ENCODE measurements at regions of chr4 and their contacts with region 1.

Region 1: DNA sequence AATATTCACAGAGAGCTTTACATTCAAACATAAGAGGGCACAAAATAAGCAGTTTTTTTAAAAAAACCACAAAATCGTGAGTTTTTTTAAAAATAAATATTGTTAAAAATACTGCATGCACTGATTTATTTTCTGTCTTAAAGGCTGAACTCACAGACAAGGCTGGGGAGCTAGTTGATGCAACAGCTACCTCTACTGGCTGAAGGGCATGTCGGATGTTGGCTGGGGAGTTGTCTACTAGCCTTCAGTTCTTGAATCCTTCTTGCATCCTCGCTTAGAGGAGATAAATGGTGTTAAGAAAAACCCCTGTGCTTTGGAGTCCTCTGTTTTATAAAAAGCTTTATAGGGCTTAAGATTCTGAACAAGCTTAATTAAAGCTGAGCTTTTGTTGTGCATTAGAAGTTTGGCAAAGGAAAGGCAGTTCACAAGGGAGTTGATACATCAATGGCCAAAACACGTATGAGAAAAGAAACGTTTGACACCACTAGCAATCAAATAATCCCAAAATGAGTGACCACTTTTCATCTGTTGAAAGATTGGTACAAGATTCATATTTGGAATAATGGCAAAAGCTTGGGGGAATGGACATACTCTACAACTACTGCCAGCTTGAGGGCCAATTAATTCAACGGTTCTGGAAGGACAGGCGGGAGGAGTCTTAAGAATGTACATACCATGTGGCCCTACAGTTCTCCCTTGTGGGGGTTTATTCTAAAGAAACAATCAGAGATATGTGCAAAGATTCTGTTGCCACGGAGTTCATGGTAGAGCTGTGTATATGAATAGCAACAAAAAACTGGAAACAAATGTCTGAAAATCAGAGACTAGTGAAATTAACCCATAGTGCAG is 94.7 kb downstream of the SEL1L3 start:
- DNase-seq: no peak
- H3K4me3 Mint-ChIP-seq: no peak overlapping the region
- H3K27ac Mint-ChIP-seq: no peak overlapping the region
- H3K4me1 Mint-ChIP-seq: no peaks in the 10 kb centered on the region
- H3K27me3 Mint-ChIP-seq: no peaks in the 10 kb centered on the region

Region 2: GRCh38 chr4:25439918-25440477 is 328.1 kb before region 1 on chr4:
- intact Hi-C with region 1: loop called (anchors 2 kb)
- DNase-seq: peak; percentile 39
- H3K4me3 Mint-ChIP-seq: no peak overlapping the region
- H3K27ac Mint-ChIP-seq: no peak overlapping the region
- H3K4me1 Mint-ChIP-seq: no peaks in the 10 kb centered on the region
- H3K27me3 Mint-ChIP-seq: no peaks in the 10 kb centered on the region

Region 3: GRCh38 chr4:25756503-25756902 is 11.6 kb before region 1 on chr4:
- intact Hi-C with region 1: no loop called
- DNase-seq: no peak
- H3K4me3 Mint-ChIP-seq: no peak overlapping the region
- H3K27ac Mint-ChIP-seq: no peak overlapping the region
- H3K4me1 Mint-ChIP-seq: no peaks in the 10 kb centered on the region
- H3K27me3 Mint-ChIP-seq: no peaks in the 10 kb centered on the region

Measured in activated T-helper 2 cell treated with anti-CD3 and anti-CD28 coated beads, Interferon-gamma antibody, Interleukin-2, Interleukin-4, amounts not matched to agents 10 μg/mL and 5 μg/mL and 100 μg/mL, durations not matched to agents 14 hours and 24 hours and 36 hours (primary cell).